Left cardiac atrium (tissue), 4 donors: ENCODE measurements at regions of chr7 and their contacts with region 1.

Region 1: DNA sequence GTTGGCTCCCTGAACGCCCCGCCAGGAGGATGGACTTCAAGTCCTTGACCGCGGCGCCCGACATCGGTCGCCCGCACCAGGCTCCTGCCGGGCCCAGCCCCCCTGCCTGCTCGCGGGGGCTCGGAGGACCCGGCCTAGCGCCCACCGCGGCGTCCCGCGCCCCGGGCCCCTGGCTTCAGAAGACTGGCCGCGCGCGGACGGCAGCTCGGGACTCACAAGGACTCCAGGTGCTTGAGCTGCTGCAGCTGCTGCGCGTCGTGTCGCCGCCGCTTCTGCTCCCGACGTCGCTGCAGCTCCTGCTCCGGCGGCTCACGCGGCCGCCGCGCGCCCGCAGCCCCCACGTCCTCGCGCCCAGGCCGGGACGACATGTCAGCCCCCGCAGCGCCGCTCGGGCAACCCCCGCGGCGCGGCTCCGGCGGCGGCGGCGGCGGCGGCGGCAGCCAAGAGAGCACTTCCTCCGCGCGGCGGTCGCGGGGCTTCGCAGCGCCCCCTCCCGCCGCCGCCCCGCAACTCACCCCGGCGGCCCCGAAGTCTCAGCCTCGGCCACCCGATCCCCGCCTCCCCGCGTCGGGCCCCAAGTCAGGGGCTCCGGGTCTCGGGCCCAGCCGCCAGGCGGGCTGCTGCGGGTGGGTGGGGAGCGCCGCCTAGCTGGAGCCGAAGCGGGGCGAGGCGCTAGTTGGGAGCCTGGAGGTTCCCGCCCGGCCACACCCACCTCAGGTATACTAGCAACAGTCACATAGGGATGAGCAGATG is at the start of gene RP9:
- DNase-seq: peak; percentile 71
- ATAC-seq: peak; percentile 92 to 96
- total RNA-seq, gene RP9: 15.2 to 16.6 TPM

Region 2: DNA sequence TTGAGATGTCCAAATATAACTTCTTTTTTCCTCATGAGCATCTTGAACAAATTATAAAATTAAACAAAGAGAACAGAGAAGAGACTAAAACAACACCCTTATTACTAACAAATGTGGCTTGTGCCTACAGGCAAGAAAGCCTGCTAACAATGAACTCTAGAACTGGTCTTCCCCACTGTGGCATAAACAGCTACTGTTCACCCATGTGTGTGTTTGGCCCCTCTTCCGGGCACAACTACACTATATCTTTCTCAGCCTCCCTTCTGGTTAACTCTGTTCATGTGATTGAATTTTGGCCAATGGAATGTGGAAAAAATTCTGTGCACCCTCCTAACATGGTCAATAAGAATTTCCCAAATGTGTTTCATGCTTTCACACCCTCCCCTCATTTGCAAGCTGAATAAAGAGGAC is 334.6 kb before region 1 on chr7:
- intact Hi-C with region 1: loop called in 1 of 2 experiments (anchors 10 kb)
- DNase-seq: no peak
- ATAC-seq: no peak

Region 3: DNA sequence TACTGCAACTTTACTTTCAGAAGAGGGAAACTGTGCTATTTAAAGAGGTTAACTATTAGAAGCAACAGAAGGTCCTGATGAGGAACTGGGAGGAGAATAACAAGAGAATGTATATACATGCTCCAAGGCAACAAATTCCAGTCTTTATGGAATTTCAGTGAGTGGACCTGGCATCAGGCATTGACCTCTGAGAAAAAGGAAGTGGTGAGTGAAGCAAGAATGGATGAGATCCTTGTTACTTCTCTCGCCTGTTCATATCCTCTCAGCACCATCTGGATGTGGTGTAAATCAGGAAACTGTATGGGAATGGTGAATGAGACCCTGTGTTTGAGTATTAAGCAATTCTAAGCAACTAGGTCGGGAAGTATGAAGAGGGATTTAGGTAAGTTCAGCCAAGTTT is 187.3 kb before region 1 on chr7:
- intact Hi-C with region 1: no loop called
- DNase-seq: no peak
- ATAC-seq: peak in 1 of 2 donors; percentile 19